AG04449 (cell line): ENCODE measurements at regions of chr6 and their contacts with region 1.

Region 1: GRCh38 chr6:29016559-29017427 is 11.7 kb upstream of the ZNF311 start:
- DNase-seq: no peak
- H3K4me3 ChIP-seq: peak overlapping the region; percentile 68
- CTCF ChIP-seq: peak; percentile 78

Region 2: GRCh38 chr6:28683944-28684538 is 332.8 kb before region 1 on chr6:
- CTCF ChIA-PET with region 1: interaction called, 12 read pairs
- POLR2A ChIA-PET with region 1: no interaction called
- DNase-seq: no peak
- H3K4me3 ChIP-seq: no peak overlapping the region
- CTCF ChIP-seq: peak; percentile 52

Region 3: DNA sequence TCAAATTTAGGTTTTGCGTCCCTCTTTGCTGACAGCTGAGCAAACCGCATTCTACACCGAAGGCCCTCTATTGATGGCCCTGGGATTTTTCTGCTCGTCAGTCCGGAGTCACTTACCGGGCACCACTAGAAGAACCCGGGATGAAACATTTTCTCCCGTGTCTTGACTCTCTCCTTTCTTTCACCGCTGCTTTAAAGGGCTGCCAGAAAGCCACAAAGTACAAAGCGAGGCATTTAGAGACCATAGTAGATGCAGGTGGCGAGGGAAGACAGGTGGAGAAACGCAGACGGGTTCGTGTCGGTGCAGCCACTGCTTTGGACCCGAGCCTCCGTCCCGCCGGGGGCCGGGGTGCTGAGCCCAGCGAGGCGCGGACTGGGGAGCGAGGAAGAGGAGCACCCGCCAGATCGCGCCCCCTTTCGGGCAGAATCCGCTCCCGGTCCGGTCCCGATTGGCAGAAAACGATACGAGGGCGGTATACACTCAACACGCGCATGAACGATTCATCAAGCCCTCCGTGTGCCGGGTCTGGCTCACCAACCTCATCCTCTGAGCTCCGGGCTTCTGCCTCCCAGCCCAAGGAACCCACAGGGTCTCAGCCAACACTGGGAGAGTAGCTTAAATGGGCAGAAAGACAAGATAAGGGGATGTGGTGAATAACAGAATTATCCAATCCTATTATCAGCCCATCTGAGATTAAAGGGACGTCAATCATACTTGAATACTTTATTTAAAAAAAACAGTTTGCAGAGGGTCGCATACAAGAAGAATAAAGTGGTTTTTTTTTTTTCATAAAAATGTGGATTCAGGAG is 178.0 kb before region 1 on chr6:
- CTCF ChIA-PET with region 1: interaction called, 45 read pairs
- POLR2A ChIA-PET with region 1: no interaction called
- DNase-seq: no peak
- H3K4me3 ChIP-seq: peak overlapping the region; percentile 81
- CTCF ChIP-seq: peak; percentile 87

Region 4: GRCh38 chr6:28985462-28986164 is 31.2 kb before region 1 on chr6:
- CTCF ChIA-PET with region 1: interaction called, 15 read pairs
- POLR2A ChIA-PET with region 1: interaction called, 4 read pairs
- DNase-seq: peak; percentile 93
- H3K4me3 ChIP-seq: peak overlapping the region; percentile 51
- CTCF ChIP-seq: no peak

Region 5: GRCh38 chr6:28996844-28997510 is 19.8 kb before region 1 on chr6:
- CTCF ChIA-PET with region 1: interaction called, 13 read pairs
- POLR2A ChIA-PET with region 1: no interaction called
- DNase-seq: no peak
- H3K4me3 ChIP-seq: no peak overlapping the region
- CTCF ChIP-seq: no peak

Region 6: DNA sequence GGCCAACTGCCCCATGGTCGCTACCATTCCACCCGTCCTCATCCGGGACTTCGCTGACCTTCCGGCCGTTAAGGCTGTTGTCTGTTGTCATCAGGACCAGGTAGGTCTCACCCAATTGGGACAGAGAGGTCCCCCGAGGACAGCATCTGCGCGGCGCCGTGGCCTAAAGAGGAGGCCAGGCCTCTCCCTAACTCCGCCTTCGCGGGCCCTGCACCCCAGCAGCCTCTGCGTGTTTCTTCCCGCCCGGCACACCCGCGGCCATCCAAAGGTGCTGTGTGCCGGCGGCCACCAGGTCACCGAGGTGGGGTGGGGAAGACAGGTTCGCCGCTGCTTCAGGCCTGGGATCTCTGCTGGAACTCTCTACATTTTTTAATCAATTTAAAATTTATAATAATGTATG is 19.2 kb after region 1 on chr6:
- CTCF ChIA-PET with region 1: interaction called, 12 read pairs
- POLR2A ChIA-PET with region 1: no interaction called
- DNase-seq: no peak
- H3K4me3 ChIP-seq: no peak overlapping the region
- CTCF ChIP-seq: no peak